HCT116 (cell line): ENCODE measurements at regions of chr9 and their contacts with region 1.

Region 1: DNA sequence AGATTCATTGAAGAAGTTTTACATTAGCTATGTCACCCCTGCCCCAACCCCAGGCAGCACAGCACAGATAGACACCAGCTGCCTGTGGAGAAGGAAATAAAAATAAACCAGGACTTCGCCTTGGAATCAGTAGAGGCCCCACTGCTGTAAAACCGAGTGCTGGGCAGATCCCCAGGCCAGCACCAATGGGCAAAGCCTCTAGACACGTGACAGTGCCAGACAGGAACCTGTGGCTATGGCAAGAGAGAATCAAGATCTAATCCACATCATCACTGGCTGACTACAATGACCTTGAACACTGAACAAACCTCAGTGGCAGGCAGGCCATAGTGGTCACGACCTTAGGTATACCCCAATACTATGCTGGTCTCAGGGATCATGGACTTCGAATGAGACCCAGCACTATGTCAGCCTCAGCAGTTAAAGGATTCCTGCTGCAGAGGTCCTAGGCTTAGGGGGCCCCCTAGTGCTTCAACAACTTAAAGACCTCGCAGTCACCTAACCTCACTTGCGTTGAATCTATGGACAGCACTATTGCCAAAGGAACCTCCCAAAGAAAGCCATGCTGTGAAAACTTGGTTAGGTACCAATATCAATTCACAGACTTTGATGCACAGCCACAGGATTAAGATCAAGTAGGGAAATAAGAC is 2118.6 kb upstream of the C9orf72 start:
- DNase-seq: peak; percentile 23
- ATAC-seq: peak; percentile 89
- H3K4me3 ChIP-seq: no peak overlapping the region
- H3K27ac ChIP-seq: no peak overlapping the region
- H3K4me1 ChIP-seq: no peaks in the 10 kb centered on the region
- H3K27me3 ChIP-seq: no peaks in the 10 kb centered on the region
- CTCF ChIP-seq: peak; percentile 21 to 53 (median 48); a peak in 5 of 6 replicates
- POLR2A ChIP-seq: no peak
- RAD21 ChIP-seq: peak; percentile 68

Region 2: DNA sequence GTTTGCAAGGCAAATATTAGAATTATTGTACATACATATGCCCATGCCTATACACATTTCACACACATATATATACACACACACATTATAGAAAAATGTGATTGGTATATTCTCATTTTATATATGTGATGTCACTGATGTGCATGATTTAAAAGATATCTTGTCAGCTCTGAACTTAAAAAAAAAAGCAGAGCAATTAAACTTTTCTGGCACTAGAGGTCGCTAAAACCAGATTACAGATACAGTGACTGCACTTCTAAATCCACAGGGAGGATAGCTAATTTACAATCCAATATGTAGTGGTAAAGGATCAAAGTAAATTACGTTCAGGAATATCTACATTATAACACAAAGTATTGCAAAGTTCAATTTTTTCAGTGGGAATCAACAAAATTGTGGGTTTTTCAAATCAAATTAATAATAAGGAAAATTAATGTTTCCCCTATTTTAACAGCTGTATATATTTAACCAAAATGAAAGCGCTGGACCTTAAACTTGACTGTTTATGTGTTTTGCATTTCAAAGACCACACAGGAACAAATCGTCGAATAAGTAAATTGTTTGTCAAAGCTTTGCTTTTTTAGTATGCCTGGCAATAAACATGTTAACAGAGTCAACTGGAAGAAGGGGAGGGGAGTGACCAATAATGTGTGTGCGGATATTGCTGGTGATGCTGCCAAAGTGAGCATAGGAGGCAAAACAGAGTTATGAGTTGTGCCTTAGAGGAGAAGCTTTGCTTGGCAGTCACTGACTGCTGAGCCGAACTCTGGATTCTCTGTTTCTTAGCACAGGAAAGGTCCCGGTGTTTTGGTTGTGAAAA is 917.3 kb before region 1 on chr9:
- CTCF ChIA-PET with region 1: interaction called, 3 read pairs
- POLR2A ChIA-PET with region 1: no interaction called
- RAD21 ChIA-PET with region 1: no interaction called
- intact Hi-C with region 1: loop called (anchors 10 kb)
- DNase-seq: peak; percentile 22
- ATAC-seq: no peak
- H3K4me3 ChIP-seq: no peak overlapping the region
- H3K27ac ChIP-seq: no peak overlapping the region
- H3K4me1 ChIP-seq: no peaks in the 10 kb centered on the region
- H3K27me3 ChIP-seq: no peaks in the 10 kb centered on the region
- CTCF ChIP-seq: peak; percentile 12 to 63 (median 41); a peak in 3 of 6 replicates
- POLR2A ChIP-seq: no peak
- RAD21 ChIP-seq: peak; percentile 45

Region 3: GRCh38 chr9:28887188-28887884 is 804.5 kb before region 1 on chr9:
- CTCF ChIA-PET with region 1: no interaction called
- POLR2A ChIA-PET with region 1: no interaction called
- RAD21 ChIA-PET with region 1: no interaction called
- intact Hi-C with region 1: loop called (anchors 10 kb)
- DNase-seq: no peak
- ATAC-seq: no peak
- H3K4me3 ChIP-seq: no peak overlapping the region
- H3K27ac ChIP-seq: no peak overlapping the region
- H3K4me1 ChIP-seq: no peaks in the 10 kb centered on the region
- H3K27me3 ChIP-seq: no peaks in the 10 kb centered on the region
- CTCF ChIP-seq: no peak
- POLR2A ChIP-seq: no peak
- RAD21 ChIP-seq: no peak